BJ (cell line): ENCODE measurements at regions of chr11 and their contacts with region 1.

Region 1: GRCh38 chr11:122101625-122102291 is 14.3 kb downstream of the BLID start:
- DNase-seq: peak; percentile 55
- H3K4me3 ChIP-seq: peak overlapping the region; percentile 68
- H3K27me3 ChIP-seq: no peaks in the 10 kb centered on the region
- CTCF ChIP-seq: peak; percentile 69

Region 2: DNA sequence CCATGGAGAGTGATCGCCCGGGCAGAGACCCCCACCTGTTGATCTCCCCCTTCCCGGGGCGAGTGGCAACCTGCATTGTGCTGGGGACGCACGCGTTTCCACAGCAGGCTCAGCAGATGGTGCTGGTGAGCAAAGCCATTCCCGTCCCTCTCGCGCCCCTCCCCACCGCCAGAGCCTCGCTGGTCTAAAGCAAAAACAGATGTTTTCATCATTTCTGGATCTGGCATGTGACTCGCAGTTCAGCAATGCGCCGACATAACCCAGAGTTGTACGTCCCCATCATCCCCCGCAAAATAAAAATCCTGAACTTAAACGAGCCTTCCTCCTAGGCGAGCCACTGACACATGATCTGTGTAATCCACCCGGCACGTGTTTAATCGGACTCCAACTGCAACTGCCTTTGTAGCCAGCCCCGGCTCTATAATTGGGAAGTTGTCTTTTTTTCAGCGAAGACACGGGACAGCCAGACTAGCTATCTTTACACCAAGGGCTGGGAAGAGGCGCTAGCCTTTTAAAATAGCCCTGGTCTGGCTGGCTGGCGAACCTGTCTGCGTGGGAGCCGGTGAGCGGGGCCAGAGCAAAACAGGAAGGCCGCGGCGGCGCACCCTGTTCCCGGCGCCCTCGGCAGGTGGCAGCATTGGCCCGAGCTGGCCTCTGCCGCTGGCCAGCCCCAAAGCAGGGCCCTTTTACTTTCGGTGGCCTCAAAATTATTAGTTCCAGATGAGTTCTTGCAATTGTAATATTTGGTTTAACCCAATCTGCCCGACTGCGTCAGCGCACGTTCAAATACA is 446.0 kb before region 1 on chr11:
- CTCF ChIA-PET with region 1: interaction called, 29 read pairs
- POLR2A ChIA-PET with region 1: interaction called, 3 read pairs
- DNase-seq: peak; percentile 91
- H3K4me3 ChIP-seq: peak overlapping the region; percentile 45
- H3K27me3 ChIP-seq: no peaks in the 10 kb centered on the region
- CTCF ChIP-seq: peak; percentile 97

Region 3: GRCh38 chr11:121898903-121899302 is 202.9 kb before region 1 on chr11:
- CTCF ChIA-PET with region 1: no interaction called
- POLR2A ChIA-PET with region 1: no interaction called
- DNase-seq: no peak
- H3K4me3 ChIP-seq: no peak overlapping the region
- H3K27me3 ChIP-seq: no peaks in the 10 kb centered on the region
- CTCF ChIP-seq: no peak

Region 4: DNA sequence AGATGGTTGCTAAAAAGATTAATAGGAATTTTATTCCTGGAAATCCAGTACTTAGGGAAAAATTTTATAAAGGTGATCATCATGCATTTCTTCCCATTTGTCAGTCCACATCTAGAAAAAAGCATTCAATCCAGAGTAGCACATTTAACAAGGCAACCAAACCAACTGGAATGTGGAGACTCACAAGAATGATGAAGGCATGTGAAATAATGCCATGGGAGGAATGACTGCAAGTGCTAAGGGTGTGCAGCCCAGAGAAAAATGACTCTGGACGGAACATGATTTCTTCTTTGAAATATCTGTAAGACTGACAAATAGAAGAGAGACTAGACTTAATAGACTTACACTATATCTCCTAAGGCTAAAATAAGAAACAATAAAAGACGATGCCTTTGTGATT is 19.5 kb before region 1 on chr11:
- CTCF ChIA-PET with region 1: interaction called, 5 read pairs
- POLR2A ChIA-PET with region 1: interaction called, 16 read pairs
- DNase-seq: no peak
- H3K4me3 ChIP-seq: no peak overlapping the region
- H3K27me3 ChIP-seq: no peaks in the 10 kb centered on the region
- CTCF ChIP-seq: no peak

Region 5: DNA sequence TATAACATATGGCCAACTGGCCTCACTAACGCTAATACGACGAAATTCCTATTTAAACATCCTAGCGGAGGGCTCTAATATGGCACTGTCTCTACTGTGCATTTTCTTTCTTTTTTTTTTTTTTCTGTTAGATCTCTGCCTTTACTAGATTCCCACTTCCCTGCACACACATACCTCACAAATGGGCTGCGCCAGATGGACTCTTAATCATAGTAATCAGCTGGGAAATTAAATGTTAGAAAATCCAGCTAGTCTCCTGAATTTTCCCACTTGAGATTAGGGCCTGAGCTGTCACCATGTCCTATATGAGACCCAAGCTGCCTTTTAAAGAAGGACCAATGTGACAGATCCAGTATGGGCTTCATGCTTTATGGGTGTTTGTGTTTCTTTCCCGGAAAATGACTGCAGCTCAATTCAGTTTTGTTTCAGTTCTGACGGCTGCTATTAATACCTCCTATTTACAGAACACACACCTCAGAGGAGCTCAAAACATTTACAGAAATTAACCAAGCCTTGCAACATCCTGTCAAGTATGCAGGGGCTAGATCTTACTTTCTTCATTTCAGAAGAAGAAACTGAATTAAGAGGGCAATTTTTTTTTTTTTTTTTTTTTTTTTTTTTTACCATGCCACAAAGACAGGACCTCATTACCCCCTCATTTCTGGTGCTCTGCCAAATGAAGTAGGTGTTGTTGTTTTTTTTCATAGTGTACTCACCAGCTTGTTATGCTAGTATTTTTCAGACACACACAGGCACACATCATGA is 64.0 kb after region 1 on chr11:
- CTCF ChIA-PET with region 1: interaction called, 3 read pairs
- POLR2A ChIA-PET with region 1: interaction called, 15 read pairs
- DNase-seq: no peak
- H3K4me3 ChIP-seq: no peak overlapping the region
- H3K27me3 ChIP-seq: no peaks in the 10 kb centered on the region
- CTCF ChIP-seq: no peak

Region 6: GRCh38 chr11:122189229-122189628 is 87.5 kb after region 1 on chr11:
- CTCF ChIA-PET with region 1: interaction called, 4 read pairs
- POLR2A ChIA-PET with region 1: interaction called, 16 read pairs
- DNase-seq: peak; percentile 95
- H3K4me3 ChIP-seq: no peak overlapping the region
- H3K27me3 ChIP-seq: no peaks in the 10 kb centered on the region
- CTCF ChIP-seq: no peak

Region 7: DNA sequence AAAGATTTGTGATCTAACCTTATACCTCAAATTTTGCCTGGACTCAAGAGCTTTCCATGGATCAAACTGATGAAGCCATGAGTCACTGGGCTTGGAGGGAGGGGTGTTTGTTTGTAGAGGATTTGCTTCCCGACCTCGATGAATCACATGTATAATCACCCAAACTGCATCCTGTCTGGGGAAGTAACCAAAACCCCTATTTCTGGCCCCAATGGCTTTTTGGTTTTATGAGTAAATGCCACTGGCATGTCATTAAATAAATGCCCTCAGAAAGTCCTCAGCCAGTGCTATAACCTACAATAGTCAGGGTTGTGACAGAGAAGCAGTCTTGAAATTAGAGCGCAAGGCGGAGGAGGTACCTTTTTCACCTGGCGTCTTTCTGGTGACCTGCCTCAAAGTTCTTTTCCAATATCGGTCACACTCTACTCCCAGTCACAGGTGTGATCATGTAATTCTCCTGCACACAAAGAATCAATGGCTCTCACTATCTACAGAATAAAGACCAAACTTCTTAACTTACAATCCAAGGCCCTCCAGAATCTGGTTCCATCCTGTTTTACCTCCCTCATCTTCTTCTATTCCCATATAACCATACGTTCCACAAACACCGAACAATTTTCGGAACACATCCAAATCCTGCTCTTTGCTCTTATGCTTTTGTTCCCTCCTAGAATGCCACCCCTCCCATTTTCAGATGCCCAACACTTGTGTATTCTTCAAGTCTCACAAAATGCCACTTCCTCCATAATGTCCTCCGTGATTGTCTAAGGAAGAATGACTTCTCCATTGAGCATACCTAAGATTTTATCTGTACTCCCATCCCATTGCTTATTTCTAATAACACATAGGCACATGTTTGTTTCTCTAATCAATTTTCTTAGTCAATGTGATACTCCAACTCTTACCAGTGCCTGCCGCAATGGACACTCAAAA is 95.6 kb after region 1 on chr11:
- CTCF ChIA-PET with region 1: interaction called, 15 read pairs
- POLR2A ChIA-PET with region 1: interaction called, 10 read pairs
- DNase-seq: peak; percentile 95
- H3K4me3 ChIP-seq: no peak overlapping the region
- H3K27me3 ChIP-seq: no peaks in the 10 kb centered on the region
- CTCF ChIP-seq: no peak

Region 8: GRCh38 chr11:122293296-122294023 is 191.7 kb after region 1 on chr11:
- CTCF ChIA-PET with region 1: no interaction called
- POLR2A ChIA-PET with region 1: no interaction called
- DNase-seq: no peak
- H3K4me3 ChIP-seq: no peak overlapping the region
- H3K27me3 ChIP-seq: peaks cover 1% of the 10 kb centered on the region; the same call in 1 of the 2 replicates
- CTCF ChIP-seq: peak; percentile 52